Tibial artery (tissue), 4 donors: ENCODE measurements at regions of chr18 and their contacts with region 1.

Region 1: DNA sequence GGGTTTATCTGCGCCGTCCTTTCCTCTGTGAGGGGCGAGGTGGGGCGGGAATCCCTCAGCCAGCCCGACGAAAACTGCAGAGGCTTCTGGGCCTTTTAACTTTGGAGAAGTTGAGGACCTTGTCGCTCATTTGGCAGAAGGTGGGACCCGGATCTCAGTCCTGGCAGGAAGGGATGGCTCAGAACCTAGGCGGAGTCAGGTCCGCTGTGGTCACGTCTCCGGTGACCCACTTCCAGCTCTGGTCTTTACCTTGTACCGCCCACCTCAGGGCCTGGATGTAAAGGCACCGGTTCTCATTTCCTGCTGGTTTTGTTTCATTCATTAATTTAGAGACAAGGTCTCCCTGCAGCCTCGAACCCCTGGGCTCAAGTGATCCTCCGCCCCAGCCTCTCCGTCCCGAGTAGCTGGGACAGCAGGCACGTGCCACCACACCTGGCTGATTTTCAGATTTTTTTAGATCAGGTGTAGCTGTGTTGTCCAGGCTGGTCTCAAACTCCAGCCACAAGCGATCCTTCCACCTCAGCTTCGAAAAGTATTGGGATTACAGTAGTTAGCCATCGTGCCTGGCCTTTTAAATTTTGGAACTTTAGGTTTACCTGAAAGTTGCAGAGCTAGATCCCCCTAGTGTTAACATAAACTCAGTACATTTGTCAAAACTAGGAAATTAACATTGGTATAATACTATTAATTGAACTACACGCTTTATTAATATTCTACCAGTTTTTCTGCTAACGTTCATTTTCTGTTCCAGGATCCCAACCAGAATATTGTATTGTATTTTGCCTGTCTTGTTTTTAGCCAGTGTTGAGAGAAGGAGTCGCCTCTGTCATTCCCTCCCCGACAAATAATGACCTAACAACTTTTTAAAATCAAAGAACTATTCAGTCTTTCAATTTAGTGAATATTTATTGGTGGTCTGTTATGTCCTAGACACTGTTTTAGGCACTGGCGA is 852 bp downstream of the POLI start:
- DNase-seq: peak in 1 of 2 donors; percentile 71
- H3K4me3 ChIP-seq: peak overlapping the region; percentile 71 to 73
- H3K27ac ChIP-seq: peak overlapping the region; percentile 88 to 90
- H3K4me1 ChIP-seq: peaks cover 0 to 18% (median 7%) of the 10 kb centered on the region in 4 donors
- H3K27me3 ChIP-seq: no peaks in the 10 kb centered on the region
- CTCF ChIP-seq: peak; percentile 40 to 52

Region 2: DNA sequence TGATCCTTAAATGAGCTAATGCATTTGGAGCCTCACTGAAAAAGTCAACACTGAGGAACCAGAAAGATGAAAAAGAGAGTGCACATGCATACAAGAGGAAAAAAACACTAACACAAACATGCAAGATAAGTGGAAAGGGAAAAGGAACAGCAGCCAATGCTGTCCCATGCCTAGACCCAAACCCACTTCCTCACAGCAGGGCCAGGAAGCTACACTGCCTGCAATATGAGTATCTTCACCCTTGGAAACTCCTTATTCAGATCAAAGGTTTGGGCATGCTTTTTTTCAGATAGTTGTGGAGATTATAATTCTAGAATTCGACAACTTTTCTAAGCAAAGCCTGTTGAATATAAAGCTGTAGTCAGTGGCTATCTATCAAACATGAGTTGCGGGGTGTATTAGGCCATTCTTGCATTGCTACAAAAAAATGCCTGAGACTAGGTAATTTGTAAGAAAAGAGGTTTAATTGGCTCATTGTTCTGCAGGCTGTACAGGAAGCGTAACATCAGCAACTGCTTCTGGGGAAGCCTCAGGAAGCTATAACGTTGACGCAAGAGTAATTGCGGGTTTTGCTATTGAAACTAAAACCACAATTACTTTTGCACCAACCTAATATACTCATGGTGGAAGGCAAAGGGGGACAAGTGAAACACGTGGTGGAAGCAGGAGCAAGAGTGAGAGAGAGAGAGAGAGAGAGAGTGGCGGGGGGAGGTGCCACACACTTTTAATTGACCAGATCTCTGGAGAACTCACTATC is 183.9 kb before region 1 on chr18:
- intact Hi-C with region 1: no loop called
- DNase-seq: no peak
- H3K4me3 ChIP-seq: no peak overlapping the region
- H3K27ac ChIP-seq: no peak overlapping the region
- H3K4me1 ChIP-seq: no peaks in the 10 kb centered on the region
- H3K27me3 ChIP-seq: no peaks in the 10 kb centered on the region
- CTCF ChIP-seq: no peak

Region 3: GRCh38 chr18:54224379-54225014 is 45.7 kb before region 1 on chr18 and contains the start of gene MBD2:
- intact Hi-C with region 1: loop called (anchors 5 kb)
- DNase-seq: peak; percentile 91 to 96
- H3K4me3 ChIP-seq: peak within 1 kb of the TSS; percentile 60 to 72
- H3K27ac ChIP-seq: peak within 1 kb of the TSS; percentile 74 to 78
- H3K4me1 ChIP-seq: peaks cover 0 to 31% (median 18%) of the 10 kb centered on the region in 4 donors
- H3K27me3 ChIP-seq: no peaks in the 10 kb centered on the region
- CTCF ChIP-seq: no peak